SK-N-SH (cell line): ENCODE measurements at regions of chr5 and their contacts with region 1.

Region 1: DNA sequence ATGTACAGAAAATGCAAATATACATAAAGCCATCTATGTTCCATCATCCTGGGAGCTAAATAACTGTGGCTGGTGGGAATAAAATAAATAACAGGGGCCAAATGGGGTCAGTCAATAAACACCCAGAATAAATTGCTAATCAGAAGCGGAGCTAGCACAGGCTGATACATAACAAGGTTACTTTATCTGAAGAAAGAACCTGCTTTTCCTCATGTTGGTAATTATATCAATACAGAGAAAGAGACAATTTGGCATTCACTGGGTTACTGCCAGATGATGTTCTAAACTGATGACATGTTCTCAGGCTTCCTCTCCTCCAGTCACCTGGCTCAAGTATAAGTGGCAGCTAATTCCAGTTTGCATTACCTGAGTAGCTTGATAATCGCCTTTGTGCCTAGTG is 144.9 kb upstream of the CD180 start:
- DNase-seq: peak; percentile 42
- H3K4me3 ChIP-seq: no peak overlapping the region
- H3K27ac ChIP-seq: peak overlapping the region in 1 of 2 experiments; percentile 67; a peak in 2 of 4 replicates
- H3K4me1 ChIP-seq: peaks cover 0 to 23% of the 10 kb centered on the region in 2 experiments; a peak in 2 of 4 replicates
- H3K27me3 ChIP-seq: no peaks in the 10 kb centered on the region
- CTCF ChIP-seq: no peak
- EP300 ChIP-seq: peak in 1 of 2 experiments; percentile 96; a peak in 2 of 4 replicates
- RAD21 ChIP-seq: no peak

Region 2: DNA sequence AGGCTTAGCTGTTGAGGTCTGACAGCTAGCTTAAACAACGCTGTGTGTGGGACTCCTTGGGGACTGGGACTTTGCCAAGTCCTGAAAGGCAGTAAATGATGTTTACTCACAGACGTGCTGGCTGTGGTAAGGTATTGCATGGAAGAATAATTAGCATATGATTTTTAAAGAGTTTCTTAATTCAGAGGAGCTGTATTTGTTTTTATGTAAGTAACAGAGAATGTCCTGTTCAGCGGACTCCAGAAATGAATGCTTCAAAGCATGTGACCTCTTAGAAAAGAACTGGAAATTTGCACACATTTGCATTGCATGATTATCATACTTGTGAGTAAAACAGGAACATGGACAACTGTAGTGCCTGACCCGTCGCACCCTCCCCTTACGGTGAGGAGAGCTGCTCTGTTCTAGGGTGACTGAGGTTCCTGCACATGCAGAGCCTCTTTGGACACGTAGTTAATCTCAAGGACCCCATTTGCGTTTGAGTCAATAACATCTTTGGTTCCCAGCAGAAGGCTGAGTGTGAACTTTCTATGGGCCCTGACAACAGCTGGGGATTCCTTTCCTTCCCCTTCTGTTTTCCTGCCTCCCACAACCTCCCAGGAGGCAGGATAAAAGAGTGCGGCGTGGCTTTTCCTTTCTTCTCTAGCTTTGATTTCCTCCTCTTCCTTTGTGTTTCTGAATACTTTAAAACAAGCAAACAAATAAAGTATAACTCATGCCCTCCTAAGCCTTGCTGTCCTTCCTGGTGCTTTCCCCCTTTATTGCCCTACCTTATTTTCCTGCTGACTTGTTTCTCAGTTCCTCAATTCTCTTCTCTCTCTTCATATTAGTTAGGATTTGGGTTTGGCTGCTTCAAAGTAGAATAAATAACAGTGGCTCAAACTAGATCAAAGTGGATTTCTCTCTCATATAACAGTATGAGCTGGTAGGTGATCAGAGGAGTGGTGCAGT is 12.3 kb after region 1 on chr5:
- CTCF ChIA-PET with region 1: interaction called, 16 read pairs
- POLR2A ChIA-PET with region 1: no interaction called
- DNase-seq: no peak
- H3K4me3 ChIP-seq: no peak overlapping the region
- H3K27ac ChIP-seq: no peak overlapping the region
- H3K4me1 ChIP-seq: peaks cover 0 to 33% of the 10 kb centered on the region in 2 experiments; a peak in 2 of 4 replicates
- H3K27me3 ChIP-seq: no peaks in the 10 kb centered on the region
- CTCF ChIP-seq: no peak
- EP300 ChIP-seq: no peak
- RAD21 ChIP-seq: no peak

Region 3: GRCh38 chr5:67364381-67364970 is 23.0 kb after region 1 on chr5:
- CTCF ChIA-PET with region 1: interaction called, 10 read pairs
- POLR2A ChIA-PET with region 1: interaction called, 3 read pairs
- DNase-seq: no peak
- H3K4me3 ChIP-seq: no peak overlapping the region
- H3K27ac ChIP-seq: no peak overlapping the region
- H3K4me1 ChIP-seq: peaks cover 15 to 24% of the 10 kb centered on the region in 2 experiments; a peak in 3 of 4 replicates
- H3K27me3 ChIP-seq: no peaks in the 10 kb centered on the region
- CTCF ChIP-seq: no peak
- EP300 ChIP-seq: no peak
- RAD21 ChIP-seq: no peak

Region 4: DNA sequence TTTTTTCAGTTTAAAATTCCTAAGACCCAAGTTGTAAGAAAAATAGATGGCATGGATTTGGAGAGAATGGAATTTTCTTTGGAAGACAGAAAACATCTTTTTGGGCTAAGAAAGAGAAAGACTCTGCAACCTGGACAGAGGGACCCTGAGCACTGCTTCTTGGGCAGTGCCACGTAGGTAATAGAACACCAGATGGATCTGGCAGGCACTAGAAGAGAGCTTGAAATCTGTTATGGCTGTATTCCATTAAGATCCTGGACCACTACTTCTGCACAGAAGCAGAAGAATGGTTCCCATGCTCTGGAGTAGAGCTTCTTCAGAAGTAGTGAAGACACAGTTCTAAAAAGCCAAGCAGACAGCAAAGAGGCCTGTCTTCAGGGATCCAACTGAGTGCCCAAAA is 161.5 kb after region 1 on chr5:
- CTCF ChIA-PET with region 1: no interaction called
- POLR2A ChIA-PET with region 1: no interaction called
- DNase-seq: no peak
- H3K4me3 ChIP-seq: no peak overlapping the region
- H3K27ac ChIP-seq: no peak overlapping the region
- H3K4me1 ChIP-seq: no peaks in the 10 kb centered on the region
- H3K27me3 ChIP-seq: no peaks in the 10 kb centered on the region
- CTCF ChIP-seq: no peak
- EP300 ChIP-seq: no peak
- RAD21 ChIP-seq: no peak